Activated naive CD4-positive, alpha-beta T cell treated with anti-CD3 and anti-CD28 coated beads for 36 hours (primary cell): ENCODE measurements at regions of chr7 and their contacts with region 1.

Region 1: GRCh38 chr7:95476904-95477594 is 8.7 kb upstream of the ASB4 start:
- DNase-seq: peak; percentile 73
- H3K4me3 Mint-ChIP-seq: no peak overlapping the region
- H3K27ac Mint-ChIP-seq: no peak overlapping the region
- H3K4me1 Mint-ChIP-seq: no peaks in the 10 kb centered on the region
- H3K27me3 Mint-ChIP-seq: peaks cover 11% of the 10 kb centered on the region

Region 2: DNA sequence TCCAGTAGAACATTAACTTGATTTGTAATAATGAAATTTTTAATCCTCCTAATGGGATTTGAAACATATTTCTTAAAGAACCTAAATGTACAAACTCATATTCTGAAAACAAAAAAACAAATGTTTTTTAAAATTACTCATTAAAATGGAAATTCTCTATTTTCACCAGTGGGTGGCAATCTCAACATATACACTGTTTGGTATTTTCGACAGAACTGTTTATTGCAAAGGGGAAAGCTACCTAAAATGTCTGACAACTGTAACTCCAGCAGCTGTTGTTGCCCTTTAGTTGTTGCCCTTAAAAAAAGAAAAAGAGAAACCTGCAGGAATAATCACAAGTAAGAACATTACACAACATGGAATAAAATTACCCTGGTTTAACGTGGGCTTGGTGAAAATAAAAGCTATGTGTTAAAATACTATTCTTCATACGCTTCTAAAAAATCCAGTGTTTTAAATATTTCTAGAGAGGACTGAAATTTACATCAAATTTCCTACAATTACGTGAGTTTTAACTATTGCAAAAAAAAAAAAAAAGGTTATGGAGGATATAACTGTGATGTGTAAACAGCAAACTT is 1027.8 kb before region 1 on chr7:
- CTCF ChIA-PET with region 1: interaction called, 6 read pairs
- intact Hi-C with region 1: loop called (anchors 1 kb)
- DNase-seq: no peak
- H3K4me3 Mint-ChIP-seq: no peak overlapping the region
- H3K27ac Mint-ChIP-seq: no peak overlapping the region
- H3K4me1 Mint-ChIP-seq: no peaks in the 10 kb centered on the region
- H3K27me3 Mint-ChIP-seq: peaks cover 12% of the 10 kb centered on the region

Region 3: DNA sequence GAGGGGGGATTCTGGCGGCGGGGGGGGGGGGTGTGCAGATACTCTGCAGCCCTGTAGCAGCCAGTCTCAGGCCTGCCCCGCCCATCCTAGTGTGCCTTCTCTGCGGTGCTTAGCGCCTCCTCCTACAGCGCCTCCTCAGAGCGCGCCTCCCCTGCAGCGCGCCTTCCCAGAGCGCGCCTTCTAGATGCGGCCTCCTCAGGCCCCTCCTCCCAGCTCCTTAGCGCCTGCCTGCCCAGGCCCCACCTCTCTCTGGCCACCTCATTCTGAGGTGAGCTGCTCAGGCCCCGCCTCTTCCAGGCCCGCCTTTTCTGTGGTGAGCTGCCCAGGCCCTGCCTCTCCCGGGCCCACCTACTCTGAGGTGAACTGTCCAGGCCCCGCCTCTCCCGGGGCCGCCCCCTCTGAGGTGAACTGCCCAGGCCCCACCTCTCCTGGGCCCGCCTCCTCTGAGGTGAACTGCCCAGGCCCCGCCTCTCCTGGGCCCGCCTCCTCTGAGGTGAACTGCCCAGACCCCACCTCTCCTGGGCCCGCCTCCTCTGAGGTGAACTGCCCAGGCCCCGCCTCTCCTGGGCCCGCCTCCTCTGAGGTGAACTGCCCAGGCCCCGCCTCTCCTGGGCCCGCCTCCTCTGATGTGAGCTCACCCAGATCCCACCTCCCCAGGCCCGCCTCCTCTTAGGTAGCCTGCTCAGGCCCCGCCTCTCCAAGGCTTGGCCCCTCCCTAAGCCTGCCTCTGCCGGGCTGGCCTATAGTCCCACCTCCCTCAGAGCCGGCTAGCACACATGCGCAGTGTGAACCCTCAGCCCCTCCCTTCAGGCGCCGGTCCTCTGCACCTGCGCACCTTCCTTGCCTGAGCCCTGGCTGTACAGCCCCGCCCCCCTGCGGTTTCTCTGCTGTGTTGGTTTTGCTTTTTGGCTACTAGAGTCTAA is 819.0 kb before region 1 on chr7:
- CTCF ChIA-PET with region 1: interaction called, 3 read pairs
- intact Hi-C with region 1: loop called (anchors 5 kb)
- DNase-seq: peak; percentile 95
- H3K4me3 Mint-ChIP-seq: peak overlapping the region; percentile 84
- H3K27ac Mint-ChIP-seq: no peak overlapping the region
- H3K4me1 Mint-ChIP-seq: peaks cover 13% of the 10 kb centered on the region
- H3K27me3 Mint-ChIP-seq: peaks cover 24% of the 10 kb centered on the region

Region 4: DNA sequence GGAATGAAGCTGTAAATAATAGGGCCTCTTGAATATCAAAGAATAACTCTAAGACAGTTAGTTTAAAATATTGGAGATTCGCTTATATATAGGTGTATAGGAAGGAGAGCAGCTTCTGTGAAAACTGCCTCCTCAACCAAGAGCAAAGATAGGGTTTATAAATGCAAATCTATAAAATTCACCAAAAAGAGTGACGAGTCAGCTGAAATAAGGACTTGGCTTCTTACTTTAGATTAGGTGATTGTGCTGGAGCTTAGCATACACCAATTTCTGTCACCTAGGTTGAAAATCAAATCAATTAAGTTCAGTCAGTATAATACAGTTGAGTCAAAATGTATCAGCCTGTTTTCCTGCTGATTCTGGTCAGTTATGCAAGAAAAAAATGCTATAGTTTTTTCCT is 707.3 kb before region 1 on chr7:
- CTCF ChIA-PET with region 1: no interaction called
- intact Hi-C with region 1: no loop called
- DNase-seq: no peak
- H3K4me3 Mint-ChIP-seq: no peak overlapping the region
- H3K27ac Mint-ChIP-seq: no peak overlapping the region
- H3K4me1 Mint-ChIP-seq: no peaks in the 10 kb centered on the region
- H3K27me3 Mint-ChIP-seq: peaks cover 11% of the 10 kb centered on the region

Region 5: DNA sequence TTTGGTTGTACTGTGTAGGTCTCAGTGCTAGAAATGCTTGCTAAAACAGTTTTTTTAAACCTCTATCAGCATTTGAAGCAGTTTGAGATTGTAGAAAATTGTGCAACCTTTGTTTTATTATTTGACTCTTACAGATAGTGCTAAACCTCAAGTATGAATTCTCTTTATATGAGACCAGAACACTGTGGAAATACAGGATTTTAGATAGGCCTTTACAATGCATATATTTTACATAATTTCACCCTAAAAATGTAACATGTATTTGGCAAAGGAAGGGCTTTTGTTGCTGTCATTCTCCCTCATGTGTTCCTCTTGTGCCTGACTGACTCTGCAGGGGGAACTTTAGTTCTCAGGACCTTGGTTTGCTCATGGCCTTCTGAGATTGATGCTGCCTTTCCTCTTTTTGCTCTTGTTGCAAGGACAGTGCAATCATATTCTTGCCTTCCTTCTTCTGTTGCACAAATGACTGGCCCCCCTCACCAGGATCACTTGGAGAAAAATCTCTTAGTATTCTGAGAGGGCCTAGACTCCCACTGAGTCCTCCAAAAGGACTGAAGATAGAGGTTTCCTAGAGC is 381.0 kb before region 1 on chr7:
- CTCF ChIA-PET with region 1: no interaction called
- intact Hi-C with region 1: loop called (anchors 10 kb)
- DNase-seq: no peak
- H3K4me3 Mint-ChIP-seq: no peak overlapping the region
- H3K27ac Mint-ChIP-seq: no peak overlapping the region
- H3K4me1 Mint-ChIP-seq: no peaks in the 10 kb centered on the region
- H3K27me3 Mint-ChIP-seq: peaks cover 4% of the 10 kb centered on the region

Region 6: DNA sequence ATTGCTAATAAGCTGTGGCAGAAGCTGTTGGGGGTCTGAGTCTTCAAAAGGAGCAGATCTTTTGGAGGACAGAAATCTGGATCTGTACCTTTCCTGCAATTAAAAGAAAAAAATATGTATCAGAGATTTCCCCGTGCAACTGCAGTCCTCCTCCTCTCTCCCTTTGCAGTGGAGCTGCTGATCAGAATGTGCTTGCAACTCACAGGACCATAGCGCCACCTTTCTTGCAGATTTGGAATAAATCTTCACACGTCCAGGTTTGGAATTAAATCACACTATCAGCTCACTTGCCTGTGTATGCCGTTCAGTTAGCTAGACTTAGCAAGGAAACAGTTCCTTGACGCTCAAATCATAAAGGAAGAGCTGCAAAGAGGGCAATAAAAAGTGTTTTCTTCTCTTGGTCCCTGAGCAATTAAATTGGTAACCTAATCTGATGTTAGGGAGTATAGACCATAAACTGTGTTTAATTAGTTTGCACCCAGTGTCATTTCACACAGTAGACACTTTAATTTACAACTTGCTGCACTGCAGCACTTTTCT is 230.1 kb before region 1 on chr7:
- CTCF ChIA-PET with region 1: interaction called, 3 read pairs
- intact Hi-C with region 1: loop called (anchors 5 kb)
- DNase-seq: peak; percentile 49
- H3K4me3 Mint-ChIP-seq: no peak overlapping the region
- H3K27ac Mint-ChIP-seq: no peak overlapping the region
- H3K4me1 Mint-ChIP-seq: no peaks in the 10 kb centered on the region
- H3K27me3 Mint-ChIP-seq: peaks cover 8% of the 10 kb centered on the region

Region 7: DNA sequence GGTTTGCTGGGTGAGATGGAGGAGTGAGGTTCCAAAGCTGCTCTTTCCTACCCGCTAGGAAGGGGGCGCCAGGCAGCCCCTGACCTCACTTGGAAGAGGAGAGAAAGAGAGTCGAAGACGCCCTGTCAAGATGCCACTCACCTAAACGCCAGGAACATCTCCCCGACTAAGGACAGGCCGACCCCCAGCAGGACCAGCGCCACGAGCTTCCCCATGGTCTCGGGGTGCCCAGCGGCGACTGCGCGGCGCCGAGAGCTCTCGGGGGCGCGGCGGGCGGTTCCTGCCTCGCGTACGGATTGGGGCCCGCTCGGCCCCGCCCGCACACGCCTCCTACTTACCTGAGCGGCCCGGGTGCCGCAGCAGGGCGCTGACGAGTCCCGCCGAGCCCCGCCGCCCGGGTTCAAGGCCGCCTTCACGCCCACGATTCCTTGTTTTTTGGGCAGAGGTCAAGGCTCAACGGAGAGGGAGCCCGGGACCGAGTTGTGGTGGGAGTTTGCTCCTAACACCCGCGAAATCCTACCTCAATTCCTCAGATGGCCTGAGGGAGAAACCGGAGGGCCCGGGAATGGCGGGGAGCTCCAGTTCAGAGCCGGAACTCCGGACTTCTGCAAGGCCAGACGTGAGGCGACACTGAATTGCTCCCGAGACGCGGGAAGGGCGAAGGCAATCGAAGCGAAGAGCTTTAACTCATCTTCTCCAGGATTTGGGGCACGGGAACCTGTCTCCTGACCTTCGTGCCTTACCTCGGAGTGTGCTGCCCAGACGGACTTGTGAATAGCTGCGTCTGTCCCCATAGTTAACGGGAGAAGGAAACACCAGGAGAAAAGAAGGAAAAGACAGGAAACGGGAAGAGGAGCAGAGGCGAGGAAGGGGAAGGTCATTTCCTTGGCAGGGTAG is 80.7 kb before region 1 on chr7 and contains the start of gene PON3:
- CTCF ChIA-PET with region 1: interaction called, 9 read pairs
- intact Hi-C with region 1: loop called (anchors 2 kb)
- DNase-seq: peak; percentile 27
- H3K4me3 Mint-ChIP-seq: peak within 1 kb of the TSS; percentile 60
- H3K27ac Mint-ChIP-seq: no peak within 1 kb of the TSS
- H3K4me1 Mint-ChIP-seq: peaks cover 2% of the 10 kb centered on the region
- H3K27me3 Mint-ChIP-seq: peaks cover 41% of the 10 kb centered on the region
- total RNA-seq, gene PON3: not detected